Calu3 (cell line): ENCODE measurements at regions of chr4 and their contacts with region 1.

Region 1: DNA sequence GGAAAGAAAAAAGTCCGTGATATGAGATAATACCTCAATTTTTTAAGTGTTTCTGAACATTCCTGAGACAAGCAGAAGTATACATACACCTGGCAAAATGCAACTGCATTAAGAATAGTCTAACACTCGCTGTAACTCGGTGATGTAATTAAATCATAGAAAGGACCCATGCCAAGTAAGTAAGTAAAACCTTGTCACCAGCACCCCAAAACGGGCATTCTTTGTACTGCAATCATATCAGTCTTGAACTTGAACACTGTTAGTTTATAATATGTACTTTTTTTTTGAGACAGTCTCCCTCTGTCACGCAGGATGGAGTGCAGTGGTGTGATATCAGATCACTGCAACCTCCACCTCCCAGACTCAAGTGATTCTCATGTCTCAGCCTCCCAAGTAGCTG is 47.4 kb downstream of the SMIM14 start:
- DNase-seq: peak; percentile 7
- H3K4me3 Mint-ChIP-seq: no peak overlapping the region
- H3K27ac Mint-ChIP-seq: no peak overlapping the region
- H3K4me1 Mint-ChIP-seq: no peaks in the 10 kb centered on the region
- H3K27me3 Mint-ChIP-seq: no peaks in the 10 kb centered on the region
- CTCF ChIP-seq: no peak

Region 2: GRCh38 chr4:39469429-39470077 is 121.7 kb before region 1 on chr4:
- CTCF ChIA-PET with region 1: interaction called, 9 read pairs
- intact Hi-C with region 1: loop called (anchors 1 kb)
- DNase-seq: peak; percentile 40
- H3K4me3 Mint-ChIP-seq: no peak overlapping the region
- H3K27ac Mint-ChIP-seq: no peak overlapping the region
- H3K4me1 Mint-ChIP-seq: peaks cover 8% of the 10 kb centered on the region
- H3K27me3 Mint-ChIP-seq: no peaks in the 10 kb centered on the region
- CTCF ChIP-seq: peak; percentile 45

Region 3: GRCh38 chr4:39495454-39496213 is 95.7 kb before region 1 on chr4:
- CTCF ChIA-PET with region 1: interaction called, 11 read pairs
- intact Hi-C with region 1: no loop called
- DNase-seq: no peak
- H3K4me3 Mint-ChIP-seq: no peak overlapping the region
- H3K27ac Mint-ChIP-seq: no peak overlapping the region
- H3K4me1 Mint-ChIP-seq: peaks cover 7% of the 10 kb centered on the region
- H3K27me3 Mint-ChIP-seq: no peaks in the 10 kb centered on the region
- CTCF ChIP-seq: no peak